ENCODE measurements at regions of chr1 and their contacts with region 1.

Region 1: GRCh38 chr1:203765029-203765837 is at the start of gene LAX1:
- DNase-seq: peak; percentile 67
- ATAC-seq: peak; percentile 87
- H3K4me3 Mint-ChIP-seq: peak within 1 kb of the TSS; percentile 94
- H3K27ac Mint-ChIP-seq: peak within 1 kb of the TSS; percentile 99
- H3K4me1 Mint-ChIP-seq: peaks cover 39% of the 10 kb centered on the region
- H3K27me3 Mint-ChIP-seq: no peaks in the 10 kb centered on the region
- total RNA-seq, gene LAX1: 26.3 to 28.4 TPM

Region 2: DNA sequence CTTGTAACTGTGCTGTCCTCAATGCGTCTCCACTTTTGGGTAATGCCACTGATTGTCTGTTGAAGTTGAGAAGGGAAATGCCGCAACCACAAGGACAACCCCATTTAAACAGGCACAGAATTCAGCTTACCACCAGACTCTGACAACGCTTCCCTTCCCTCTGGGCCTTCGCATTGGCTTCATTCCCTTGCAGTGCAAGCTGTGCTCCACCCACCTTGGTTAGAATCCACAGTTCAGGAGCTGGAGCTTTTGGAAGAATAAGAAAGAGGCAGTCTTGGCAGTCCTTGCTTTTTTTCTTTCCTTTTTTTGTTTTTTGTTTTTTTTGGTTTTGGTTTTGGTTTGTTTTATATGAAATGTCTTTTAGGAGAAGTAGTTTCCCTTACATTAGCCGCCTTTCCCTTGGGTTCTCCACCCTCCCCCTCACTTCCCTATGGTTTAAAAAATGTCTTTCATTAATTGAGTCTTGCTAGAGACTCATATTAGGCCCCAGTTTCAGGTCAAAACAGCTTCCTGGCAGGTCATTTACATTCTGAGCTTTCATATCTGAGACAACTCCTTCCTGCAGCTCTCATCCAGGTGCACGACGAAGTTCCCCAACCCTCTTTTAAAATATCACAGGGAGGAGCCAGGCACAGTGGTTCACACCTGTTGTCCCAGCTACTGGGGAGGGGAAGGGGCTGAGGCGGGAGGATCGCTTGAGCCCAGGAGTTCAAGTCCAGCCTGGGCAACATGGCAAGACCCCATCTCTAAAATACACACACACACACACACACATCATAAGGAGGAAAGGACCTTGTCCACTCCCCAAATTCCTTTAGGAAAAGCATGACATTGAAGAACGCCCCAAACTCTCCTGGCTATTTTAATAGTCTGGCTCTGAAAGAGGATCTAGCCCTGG is 20.9 kb before region 1 on chr1:
- POLR2A ChIA-PET with region 1: interaction called, 16 read pairs
- DNase-seq: no peak
- ATAC-seq: no peak
- H3K4me3 Mint-ChIP-seq: peak overlapping the region; percentile 73
- H3K27ac Mint-ChIP-seq: peak overlapping the region; percentile 82
- H3K4me1 Mint-ChIP-seq: peaks cover 18% of the 10 kb centered on the region
- H3K27me3 Mint-ChIP-seq: no peaks in the 10 kb centered on the region

Region 3: GRCh38 chr1:203754455-203754864 is 10.8 kb before region 1 on chr1:
- POLR2A ChIA-PET with region 1: interaction called, 14 read pairs
- DNase-seq: no peak
- ATAC-seq: peak; percentile 68
- H3K4me3 Mint-ChIP-seq: peak overlapping the region; percentile 40
- H3K27ac Mint-ChIP-seq: peak overlapping the region; percentile 86
- H3K4me1 Mint-ChIP-seq: peaks cover 20% of the 10 kb centered on the region
- H3K27me3 Mint-ChIP-seq: no peaks in the 10 kb centered on the region

Measured in activated naive CD8-positive, alpha-beta T cell treated with anti-CD3 and anti-CD28 coated beads, Interleukin-2, amount 10 ng/mL, durations not matched to agents 7 days and 5 days (primary cell).